ENCODE measurements at regions of chr16 and their contacts with region 1.

Region 1: GRCh38 chr16:23729503-23730424 is 16.7 kb upstream of the ERN2 start:
- DNase-seq: peak; percentile 31
- ATAC-seq: peak; percentile 58
- H3K4me3 ChIP-seq: no peak overlapping the region
- H3K27ac ChIP-seq: no peak overlapping the region
- H3K4me1 ChIP-seq: peaks cover 7 to 23% of the 10 kb centered on the region in 2 experiments; a peak in 3 of 4 replicates
- H3K27me3 ChIP-seq: no peaks in the 10 kb centered on the region
- CTCF ChIP-seq: no peak
- POLR2A ChIP-seq: no peak
- RAD21 ChIP-seq: no peak

Region 2: DNA sequence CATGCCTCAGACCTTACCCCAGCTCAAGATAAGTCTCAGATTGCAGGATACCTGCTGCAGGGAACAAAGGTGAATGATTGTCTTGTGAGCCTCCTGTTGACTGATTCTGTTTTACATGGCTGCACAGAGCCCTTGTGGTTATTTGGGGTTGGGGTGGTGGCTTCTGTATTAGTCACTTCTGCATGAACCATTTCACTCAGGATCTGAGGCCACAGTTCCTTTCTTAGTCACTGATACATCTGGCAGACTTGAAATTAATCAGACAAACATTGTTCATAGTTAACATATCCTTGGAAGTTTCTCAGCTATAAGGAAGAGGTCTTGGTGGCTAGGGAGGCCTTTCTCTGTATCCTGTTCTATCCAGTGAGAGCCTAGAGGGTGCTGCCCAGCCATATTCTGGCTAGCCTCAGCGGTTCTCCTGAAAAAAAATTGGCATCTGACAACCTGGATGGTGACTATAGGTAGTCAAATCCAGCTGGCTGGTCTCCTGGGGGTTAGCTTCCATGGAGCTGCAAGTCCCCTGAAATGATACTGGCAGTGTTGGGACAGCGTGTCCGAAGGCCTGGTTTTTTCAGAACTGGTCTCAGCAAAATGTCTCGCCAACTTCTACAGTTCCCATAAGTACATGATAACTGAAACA is 59.5 kb before region 1 on chr16:
- CTCF ChIA-PET with region 1: no interaction called
- POLR2A ChIA-PET with region 1: no interaction called
- RAD21 ChIA-PET with region 1: no interaction called
- intact Hi-C with region 1: no loop called
- DNase-seq: no peak
- ATAC-seq: no peak
- H3K4me3 ChIP-seq: no peak overlapping the region
- H3K27ac ChIP-seq: no peak overlapping the region
- H3K4me1 ChIP-seq: no peaks in the 10 kb centered on the region
- H3K27me3 ChIP-seq: no peaks in the 10 kb centered on the region
- CTCF ChIP-seq: no peak
- POLR2A ChIP-seq: no peak
- RAD21 ChIP-seq: no peak

Region 3: DNA sequence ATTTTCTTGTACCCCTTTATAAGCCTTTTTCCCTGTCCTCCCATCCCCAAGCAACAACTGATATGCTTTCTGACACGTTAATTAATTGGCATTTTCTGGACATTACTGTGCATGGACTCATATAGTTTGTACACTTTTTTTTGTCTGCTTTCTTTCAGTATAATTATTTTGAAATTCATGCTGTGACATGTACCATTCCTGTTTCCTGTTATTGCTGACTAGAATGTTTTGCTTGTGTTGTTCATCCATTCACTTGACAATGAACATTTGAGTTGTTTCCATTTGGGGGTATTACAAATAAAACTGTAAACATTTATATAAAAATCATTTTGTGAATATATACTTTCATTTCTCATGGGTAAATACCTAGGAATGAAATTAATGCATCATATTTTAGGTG is 860.2 kb after region 1 on chr16:
- CTCF ChIA-PET with region 1: no interaction called
- POLR2A ChIA-PET with region 1: no interaction called
- RAD21 ChIA-PET with region 1: no interaction called
- intact Hi-C with region 1: loop called (anchors 5 kb)
- DNase-seq: no peak
- ATAC-seq: no peak
- H3K4me3 ChIP-seq: no peak overlapping the region
- H3K27ac ChIP-seq: no peak overlapping the region
- H3K4me1 ChIP-seq: peaks cover 0 to 7% of the 10 kb centered on the region in 2 experiments; a peak in 2 of 4 replicates
- H3K27me3 ChIP-seq: no peaks in the 10 kb centered on the region
- CTCF ChIP-seq: no peak
- POLR2A ChIP-seq: no peak
- RAD21 ChIP-seq: no peak